GM12878 (cell line): ENCODE measurements at regions of chr6 and their contacts with region 1.

Region 1: GRCh38 chr6:135257631-135258405 is 76.7 kb downstream of the MYB start:
- DNase-seq: no peak
- ATAC-seq: peak; percentile 54
- H3K4me3 ChIP-seq: no peak overlapping the region
- H3K27ac ChIP-seq: no peak overlapping the region
- H3K4me1 ChIP-seq: no peaks in the 10 kb centered on the region
- H3K27me3 ChIP-seq: no peaks in the 10 kb centered on the region; a peak in 2 of 4 replicates
- CTCF ChIP-seq: peak in 2 of 3 experiments; percentile 19 to 30; a peak in 3 of 6 replicates
- EP300 ChIP-seq: no peak
- POLR2A ChIP-seq: no peak
- RAD21 ChIP-seq: peak; percentile 44

Region 2: GRCh38 chr6:134138226-134138975 is 1119.4 kb before region 1 on chr6:
- CTCF ChIA-PET with region 1: no interaction called
- POLR2A ChIA-PET with region 1: no interaction called
- RAD21 ChIA-PET with region 1: no interaction called
- SMC1A ChIA-PET with region 1: no interaction called
- in situ Hi-C with region 1: no loop called
- intact Hi-C with region 1: no loop called
- DNase-seq: no peak
- ATAC-seq: no peak
- H3K4me3 ChIP-seq: no peak overlapping the region
- H3K27ac ChIP-seq: no peak overlapping the region
- H3K4me1 ChIP-seq: no peaks in the 10 kb centered on the region
- H3K27me3 ChIP-seq: 0 out of 4 replicates have a peak, but pooled peaks cover 0 to 2% of the 10 kb centered on the region in 2 experiments
- CTCF ChIP-seq: no peak
- EP300 ChIP-seq: no peak
- POLR2A ChIP-seq: no peak
- RAD21 ChIP-seq: no peak

Region 3: DNA sequence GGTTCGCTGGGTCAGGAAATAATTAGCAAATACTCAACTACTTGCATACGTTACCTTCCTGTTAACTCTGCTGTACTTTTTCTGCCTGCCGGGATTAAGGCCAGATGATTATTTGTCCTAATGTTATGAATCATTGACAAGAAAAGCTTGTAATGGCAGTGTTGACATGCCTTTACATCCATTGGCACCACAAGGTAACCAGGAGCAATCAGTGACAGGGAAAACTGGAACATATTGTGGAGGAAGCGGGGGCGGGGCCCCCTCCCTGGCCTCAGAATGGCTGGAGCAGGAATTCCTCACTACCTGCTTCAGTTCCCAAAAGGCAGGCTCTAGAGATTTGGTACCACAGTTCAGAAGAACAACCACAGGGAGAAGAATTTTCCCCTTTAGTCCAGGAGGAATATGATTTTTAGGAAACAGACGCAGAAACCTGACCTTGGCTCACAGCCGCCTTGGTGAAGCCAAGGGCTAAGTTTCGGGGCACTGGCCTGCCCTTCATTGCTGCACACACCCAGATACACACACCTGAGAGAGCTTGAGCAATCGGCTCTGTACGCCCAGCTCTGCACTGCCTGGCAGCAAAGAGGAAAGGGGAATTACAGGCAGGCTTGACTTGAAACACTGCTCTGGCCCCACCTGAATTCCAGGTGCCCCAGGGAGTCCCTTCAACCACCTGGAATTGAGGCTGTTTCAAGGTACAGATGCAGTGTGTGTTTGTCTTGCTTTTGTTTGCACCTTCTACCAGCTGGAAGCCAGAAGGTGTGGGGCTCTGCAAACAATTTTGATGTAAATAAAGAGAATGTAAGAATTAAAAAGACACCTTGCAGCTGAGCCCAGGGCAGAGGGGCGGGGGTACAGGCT is 13.1 kb after region 1 on chr6:
- CTCF ChIA-PET with region 1: interaction called, 14 read pairs
- POLR2A ChIA-PET with region 1: interaction called, 3 read pairs
- RAD21 ChIA-PET with region 1: interaction called, 3 read pairs
- SMC1A ChIA-PET with region 1: interaction called, 6 read pairs
- in situ Hi-C with region 1: no loop called
- intact Hi-C with region 1: no loop called
- DNase-seq: no peak
- ATAC-seq: no peak
- H3K4me3 ChIP-seq: no peak overlapping the region
- H3K27ac ChIP-seq: no peak overlapping the region
- H3K4me1 ChIP-seq: peaks cover 3% of the 10 kb centered on the region; the same call in 1 of the 2 replicates
- H3K27me3 ChIP-seq: no peaks in the 10 kb centered on the region
- CTCF ChIP-seq: no peak
- EP300 ChIP-seq: no peak
- POLR2A ChIP-seq: no peak
- RAD21 ChIP-seq: no peak

Region 4: DNA sequence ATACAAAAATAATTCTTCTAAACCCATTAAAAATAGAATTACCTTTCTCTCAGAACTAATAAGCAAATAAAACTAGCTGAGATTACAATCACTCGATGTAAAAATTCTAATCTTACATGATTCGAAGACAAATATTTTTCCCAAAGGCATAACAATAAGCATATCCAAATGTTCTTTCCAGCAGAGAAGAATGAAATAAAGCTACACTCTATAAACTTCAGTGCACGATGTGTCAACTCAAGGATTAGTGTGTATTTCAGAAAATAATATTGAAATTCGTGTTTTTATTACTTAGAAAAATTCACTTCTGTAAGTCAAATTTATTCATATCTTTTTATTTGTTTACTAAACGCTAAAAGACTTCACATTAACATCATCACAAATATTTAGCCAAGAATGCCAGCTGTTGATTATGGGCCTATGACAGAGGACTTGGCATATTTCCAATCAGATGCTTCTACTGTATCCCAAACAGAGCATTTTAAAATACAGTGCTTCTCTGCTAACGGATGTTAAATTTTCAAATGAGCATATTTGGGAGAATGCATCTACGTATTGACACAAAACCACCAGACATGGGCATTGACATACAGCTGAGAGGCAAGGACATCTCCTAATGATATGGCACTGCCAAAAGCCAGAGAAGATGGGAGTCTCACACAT is 539.0 kb after region 1 on chr6:
- CTCF ChIA-PET with region 1: no interaction called
- POLR2A ChIA-PET with region 1: no interaction called
- RAD21 ChIA-PET with region 1: no interaction called
- SMC1A ChIA-PET with region 1: no interaction called
- in situ Hi-C with region 1: no loop called
- intact Hi-C with region 1: no loop called
- DNase-seq: no peak
- ATAC-seq: no peak
- H3K4me3 ChIP-seq: no peak overlapping the region
- H3K27ac ChIP-seq: no peak overlapping the region
- H3K4me1 ChIP-seq: no peaks in the 10 kb centered on the region
- H3K27me3 ChIP-seq: no peaks in the 10 kb centered on the region
- CTCF ChIP-seq: no peak
- EP300 ChIP-seq: no peak
- POLR2A ChIP-seq: no peak
- RAD21 ChIP-seq: no peak